GM18951 (cell line): ENCODE measurements at regions of chr20 and their contacts with region 1.

Region 1: GRCh38 chr20:36273414-36274180 is 32.5 kb upstream of the DLGAP4 start:
- POLR2A ChIP-seq: no peak

Region 2: DNA sequence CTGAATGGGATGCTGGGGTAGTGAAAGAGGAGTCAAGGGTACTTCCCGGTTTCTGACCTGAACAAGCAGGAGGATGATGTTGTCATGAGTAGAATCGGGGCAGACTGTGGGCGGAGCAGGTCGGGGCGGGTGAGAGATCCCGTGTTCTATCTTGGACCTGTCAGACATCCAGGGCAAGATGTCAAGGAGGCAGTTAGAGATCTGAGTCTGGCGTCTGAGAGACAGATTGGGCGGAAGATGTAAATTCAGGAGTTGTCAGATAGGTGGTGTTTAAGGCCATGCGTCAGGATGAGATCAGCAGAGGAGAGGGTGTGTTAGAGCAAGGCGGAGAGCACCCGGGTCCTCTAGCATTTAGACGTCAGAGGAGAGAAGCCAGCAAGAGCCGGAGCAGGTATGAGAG is 148.0 kb after region 1 on chr20:
- in situ Hi-C with region 1: loop called (anchors 10 kb)
- POLR2A ChIP-seq: no peak